ENCODE measurements at regions of chr12 and their contacts with region 1.

Region 1: GRCh38 chr12:57904848-57905811 is 36.2 kb upstream of the ATP23 start:
- DNase-seq: peak; percentile 73 to 90 (median 85)
- ATAC-seq: peak; percentile 100
- H3K4me3 ChIP-seq: no peak overlapping the region
- H3K4me3 Mint-ChIP-seq: peak overlapping the region; percentile 61
- H3K27ac ChIP-seq: no peak overlapping the region
- H3K27ac Mint-ChIP-seq: no peak overlapping the region
- H3K4me1 ChIP-seq: peaks cover 3% of the 10 kb centered on the region
- H3K4me1 Mint-ChIP-seq: peaks cover 5% of the 10 kb centered on the region
- H3K27me3 ChIP-seq: peaks cover 0 to 2% of the 10 kb centered on the region in 2 experiments
- H3K27me3 Mint-ChIP-seq: peaks cover 5% of the 10 kb centered on the region
- CTCF ChIP-seq: peak; percentile 100

Region 2: GRCh38 chr12:57751788-57752667 is 153.1 kb before region 1 on chr12 and contains the start of gene CDK4:
- CTCF ChIA-PET with region 1: interaction called, 33 read pairs
- POLR2A ChIA-PET with region 1: no interaction called
- intact Hi-C with region 1: loop called (anchors 1 kb)
- DNase-seq: peak; percentile 96 to 100 (median 99)
- ATAC-seq: peak; percentile 78
- H3K4me3 ChIP-seq: peak within 1 kb of the TSS; percentile 80 to 85
- H3K4me3 Mint-ChIP-seq: peak within 1 kb of the TSS; percentile 90
- H3K27ac ChIP-seq: peak within 1 kb of the TSS; percentile 84 to 92
- H3K27ac Mint-ChIP-seq: peak within 1 kb of the TSS; percentile 88
- H3K4me1 ChIP-seq: peaks cover 50% of the 10 kb centered on the region
- H3K4me1 Mint-ChIP-seq: peaks cover 57% of the 10 kb centered on the region
- H3K27me3 ChIP-seq: no peaks in the 10 kb centered on the region
- H3K27me3 Mint-ChIP-seq: no peaks in the 10 kb centered on the region
- CTCF ChIP-seq: no peak
- total RNA-seq, gene CDK4: 8.5 to 10.0 TPM

Region 3: DNA sequence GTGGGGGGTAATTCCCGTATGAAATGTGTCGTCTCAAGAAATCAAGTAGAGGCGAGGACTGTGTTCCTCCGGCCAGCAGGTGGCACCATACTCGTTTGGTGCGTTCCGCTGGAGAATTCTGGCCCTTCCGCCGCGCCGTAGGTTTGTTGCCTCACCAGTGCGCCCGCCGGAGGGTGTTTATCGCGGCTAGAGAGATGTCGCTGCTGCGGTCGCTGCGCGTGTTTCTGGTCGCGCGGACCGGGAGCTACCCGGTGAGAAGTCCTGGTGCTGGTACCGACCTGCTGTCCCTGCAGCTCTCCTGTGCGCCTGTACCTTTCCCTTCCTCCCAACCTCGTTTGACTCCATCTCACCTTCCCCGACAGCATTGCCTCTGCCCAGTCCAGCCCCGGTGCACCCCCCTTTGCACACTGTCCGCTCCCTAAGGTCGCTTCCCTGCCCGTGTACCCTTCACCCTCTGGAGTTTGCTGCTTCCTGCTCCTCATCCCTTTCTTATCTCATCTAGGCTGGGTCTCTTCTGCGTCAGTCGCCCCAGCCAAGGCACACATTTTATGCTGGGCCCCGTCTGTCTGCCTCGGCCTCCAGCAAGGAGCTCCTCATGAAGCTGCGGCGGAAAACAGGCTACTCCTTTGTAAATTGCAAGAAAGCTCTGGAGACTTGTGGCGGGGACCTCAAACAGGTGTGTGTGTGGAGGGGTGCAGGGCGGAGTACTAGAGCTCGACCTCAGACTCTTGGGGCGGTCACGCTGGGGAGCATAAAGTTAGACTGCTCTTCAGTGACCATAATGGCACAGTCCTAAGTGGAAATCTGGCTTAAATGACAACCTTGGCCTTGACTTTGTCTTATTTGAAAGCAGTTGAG is 122.3 kb before region 1 on chr12 and contains the start of gene TSFM:
- CTCF ChIA-PET with region 1: interaction called, 16 read pairs
- POLR2A ChIA-PET with region 1: no interaction called
- intact Hi-C with region 1: loop called in 1 of 2 experiments (anchors 1 kb)
- DNase-seq: peak; percentile 93 to 99 (median 97)
- ATAC-seq: peak; percentile 96
- H3K4me3 ChIP-seq: peak within 1 kb of the TSS; percentile 87 to 95
- H3K4me3 Mint-ChIP-seq: peak within 1 kb of the TSS; percentile 100
- H3K27ac ChIP-seq: peak within 1 kb of the TSS; percentile 72 to 85
- H3K27ac Mint-ChIP-seq: peak within 1 kb of the TSS; percentile 99
- H3K4me1 ChIP-seq: peaks cover 36% of the 10 kb centered on the region
- H3K4me1 Mint-ChIP-seq: peaks cover 51% of the 10 kb centered on the region
- H3K27me3 ChIP-seq: no peaks in the 10 kb centered on the region
- H3K27me3 Mint-ChIP-seq: no peaks in the 10 kb centered on the region
- CTCF ChIP-seq: peak; percentile 92
- total RNA-seq, gene TSFM: 37.0 to 37.1 TPM

Region 4: DNA sequence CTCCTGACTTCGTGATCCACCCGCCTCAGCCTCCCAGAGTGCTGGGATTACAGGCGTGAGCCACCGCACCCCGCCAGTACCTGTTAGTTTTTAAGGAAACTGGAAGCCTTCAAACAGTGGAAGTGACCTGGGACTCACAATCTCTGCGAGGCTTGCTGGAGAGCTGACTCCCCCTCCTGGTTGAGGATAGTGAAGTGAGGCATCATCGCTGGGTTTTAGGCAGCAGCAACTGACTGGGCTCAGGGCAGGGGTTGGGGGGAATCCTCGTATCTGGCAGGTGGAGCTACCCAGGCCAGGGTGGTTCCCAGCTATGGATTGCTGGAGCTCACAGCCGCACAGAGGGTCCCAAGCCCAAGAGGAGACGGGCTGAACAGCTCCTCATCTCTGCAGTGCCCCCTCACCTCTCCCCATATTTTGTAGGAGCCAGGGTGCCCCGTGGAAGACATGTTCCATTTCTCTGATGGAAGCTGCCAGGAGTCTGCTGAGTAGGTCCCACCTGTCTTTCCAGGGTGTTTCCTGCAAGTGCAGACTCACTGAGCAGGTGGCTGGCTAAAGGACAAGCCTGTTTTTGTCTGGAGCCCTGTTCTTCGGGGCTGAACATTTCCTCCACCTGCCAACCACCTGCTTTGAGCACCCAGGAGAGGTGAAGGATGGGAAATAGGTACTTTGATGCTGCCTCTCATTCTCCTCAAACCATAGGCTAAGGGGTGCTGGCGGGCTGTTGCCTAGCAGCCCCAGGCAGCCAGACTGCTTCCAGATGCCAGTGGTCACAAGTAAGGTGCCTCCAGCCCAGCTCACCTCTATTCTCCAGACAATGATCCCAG is 89.7 kb before region 1 on chr12:
- CTCF ChIA-PET with region 1: interaction called, 20 read pairs
- POLR2A ChIA-PET with region 1: no interaction called
- intact Hi-C with region 1: no loop called
- DNase-seq: peak in 1 of 9 experiments; percentile 30
- ATAC-seq: no peak
- H3K4me3 ChIP-seq: no peak overlapping the region
- H3K4me3 Mint-ChIP-seq: no peak overlapping the region
- H3K27ac ChIP-seq: no peak overlapping the region
- H3K27ac Mint-ChIP-seq: no peak overlapping the region
- H3K4me1 ChIP-seq: no peaks in the 10 kb centered on the region
- H3K4me1 Mint-ChIP-seq: no peaks in the 10 kb centered on the region
- H3K27me3 ChIP-seq: no peaks in the 10 kb centered on the region
- H3K27me3 Mint-ChIP-seq: no peaks in the 10 kb centered on the region
- CTCF ChIP-seq: no peak

Region 5: DNA sequence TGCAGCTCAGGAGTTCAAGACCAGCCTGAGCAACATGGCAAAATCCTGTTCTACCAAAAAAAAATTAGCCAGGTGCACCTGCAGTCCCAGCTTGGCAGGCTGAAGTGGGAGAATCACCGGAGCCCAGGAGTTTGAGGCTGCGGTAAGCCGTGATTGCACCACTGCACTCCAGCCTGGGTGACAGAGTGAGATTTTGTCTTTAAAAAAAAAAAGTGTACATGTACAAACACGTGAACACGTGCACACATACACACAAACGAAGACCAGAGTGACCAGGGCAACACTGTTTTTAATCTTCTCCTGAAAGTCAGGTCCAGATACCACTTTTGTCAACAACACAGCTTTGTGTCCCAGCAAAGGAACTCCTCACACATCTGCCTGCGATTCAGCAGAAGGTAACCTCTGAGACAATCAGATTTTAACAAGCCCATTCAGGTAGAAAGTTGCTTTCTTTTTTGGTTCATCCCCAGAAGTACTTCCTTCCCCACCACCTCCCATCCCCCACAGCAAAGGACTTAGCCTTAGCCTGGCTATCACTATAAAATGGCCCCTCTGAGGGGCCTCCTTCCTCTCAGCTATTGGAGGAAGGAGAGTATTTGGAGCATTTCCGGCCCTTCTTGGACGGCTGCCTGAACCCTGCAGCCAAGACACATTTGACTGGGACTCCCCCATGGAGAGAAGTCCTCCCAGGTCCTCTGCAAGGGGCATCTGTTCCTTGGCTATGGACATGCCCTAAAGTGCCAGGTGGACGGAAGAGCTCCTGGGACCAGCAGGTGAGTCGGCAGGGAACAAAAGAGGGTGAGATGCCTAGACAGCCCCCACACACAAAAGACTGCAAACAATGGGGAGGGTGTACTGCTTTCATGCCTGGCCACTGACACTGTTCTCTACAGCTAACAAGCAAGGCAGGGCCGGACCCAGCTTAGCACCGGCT is 68.4 kb before region 1 on chr12:
- CTCF ChIA-PET with region 1: interaction called, 102 read pairs
- POLR2A ChIA-PET with region 1: no interaction called
- intact Hi-C with region 1: loop called (anchors 1 kb)
- DNase-seq: peak in 5 of 9 experiments; percentile 42 to 73 (median 55)
- ATAC-seq: peak; percentile 26
- H3K4me3 ChIP-seq: peak overlapping the region in 1 of 2 experiments; percentile 32
- H3K4me3 Mint-ChIP-seq: peak overlapping the region; percentile 63
- H3K27ac ChIP-seq: peak overlapping the region; percentile 37 to 64
- H3K27ac Mint-ChIP-seq: peak overlapping the region; percentile 94
- H3K4me1 ChIP-seq: peaks cover 98% of the 10 kb centered on the region
- H3K4me1 Mint-ChIP-seq: peaks cover 93% of the 10 kb centered on the region
- H3K27me3 ChIP-seq: no peaks in the 10 kb centered on the region
- H3K27me3 Mint-ChIP-seq: no peaks in the 10 kb centered on the region
- CTCF ChIP-seq: no peak

Region 6: DNA sequence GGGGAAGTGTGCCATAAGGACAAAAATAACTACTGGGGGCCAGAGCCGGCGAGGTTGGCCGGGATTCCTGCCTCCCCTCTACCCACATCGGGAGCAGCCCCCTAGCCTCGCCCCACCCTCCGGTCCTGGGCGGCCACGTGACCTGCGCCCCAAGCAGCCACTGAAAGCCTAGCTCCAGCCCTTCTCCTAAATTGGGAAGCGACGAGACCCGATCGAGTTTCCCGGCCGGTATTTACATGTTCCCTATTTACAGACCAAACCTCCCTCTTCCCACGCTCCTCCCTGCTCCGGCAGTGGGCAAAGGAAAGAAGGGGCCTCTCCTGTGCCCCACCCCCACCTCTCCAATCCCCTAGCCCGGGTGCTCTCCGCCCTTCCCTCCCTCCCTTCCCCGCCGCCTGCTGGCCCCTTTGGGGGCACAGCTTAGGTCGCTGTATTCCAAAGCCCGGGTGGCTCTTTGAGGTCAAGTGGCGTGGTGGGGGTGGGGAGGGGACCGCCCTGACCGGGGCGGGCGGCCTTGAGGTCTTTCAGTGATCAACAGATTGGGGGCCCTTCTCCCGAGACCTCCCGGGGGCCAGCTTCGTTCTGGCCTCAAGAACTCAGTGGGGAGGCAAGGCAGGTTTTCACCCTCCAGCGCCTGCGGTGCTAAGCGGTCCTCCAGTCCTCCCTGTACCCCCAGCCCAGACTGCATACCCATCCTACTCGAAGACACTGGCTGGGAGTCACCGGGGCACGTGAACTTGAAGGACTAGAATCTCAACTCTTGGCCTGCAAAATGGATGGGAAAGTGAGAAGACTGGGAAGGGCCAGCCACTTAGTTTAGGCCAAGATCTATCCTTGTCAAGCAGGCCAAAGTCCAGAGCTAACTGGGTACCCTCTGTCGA is 52.3 kb before region 1 on chr12:
- CTCF ChIA-PET with region 1: interaction called, 19 read pairs
- POLR2A ChIA-PET with region 1: no interaction called
- intact Hi-C with region 1: loop called in 1 of 2 experiments (anchors 5 kb)
- DNase-seq: no peak
- ATAC-seq: no peak
- H3K4me3 ChIP-seq: no peak overlapping the region
- H3K4me3 Mint-ChIP-seq: peak overlapping the region; percentile 29
- H3K27ac ChIP-seq: no peak overlapping the region
- H3K27ac Mint-ChIP-seq: no peak overlapping the region
- H3K4me1 ChIP-seq: peaks cover 16% of the 10 kb centered on the region
- H3K4me1 Mint-ChIP-seq: peaks cover 21% of the 10 kb centered on the region
- H3K27me3 ChIP-seq: peaks cover 0 to 6% of the 10 kb centered on the region in 2 experiments
- H3K27me3 Mint-ChIP-seq: peaks cover 16% of the 10 kb centered on the region
- CTCF ChIP-seq: no peak

Region 7: DNA sequence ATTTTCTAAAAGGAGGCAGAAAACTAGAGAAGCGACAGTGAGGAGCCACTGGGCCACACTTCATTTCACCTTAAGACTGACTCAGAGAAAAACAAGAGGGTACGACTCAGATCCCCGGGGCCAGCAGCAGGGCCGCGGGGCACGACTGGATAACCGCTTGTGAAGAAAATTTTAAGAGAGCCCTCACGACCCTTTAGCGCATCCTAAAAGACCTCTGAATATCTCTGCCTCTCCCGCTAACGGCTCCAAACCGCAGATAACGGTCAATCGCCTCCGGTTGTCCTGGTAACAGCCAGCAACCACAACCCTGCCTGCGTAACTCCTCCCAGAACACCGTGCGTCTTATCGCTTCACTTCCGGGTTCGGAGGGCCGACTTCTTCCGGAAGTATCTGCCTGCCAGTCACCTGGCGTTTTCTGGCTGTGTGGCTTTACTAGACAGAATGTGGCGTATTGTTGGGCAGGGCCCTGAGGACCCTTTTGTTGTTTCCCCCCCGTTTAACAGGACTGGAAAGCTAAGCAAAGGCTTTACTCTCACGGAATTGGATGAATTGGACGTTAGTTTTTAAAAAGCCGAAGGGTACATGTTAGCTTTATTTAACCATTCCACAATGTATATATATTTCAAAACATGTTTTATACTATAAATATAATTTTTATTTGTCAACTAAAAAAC is 30.8 kb after region 1 on chr12:
- CTCF ChIA-PET with region 1: no interaction called
- POLR2A ChIA-PET with region 1: no interaction called
- intact Hi-C with region 1: loop called in 1 of 2 experiments (anchors 1 kb)
- DNase-seq: peak; percentile 81 to 98 (median 90)
- ATAC-seq: peak; percentile 90
- H3K4me3 ChIP-seq: peak overlapping the region; percentile 49 to 61
- H3K4me3 Mint-ChIP-seq: peak overlapping the region; percentile 99
- H3K27ac ChIP-seq: peak overlapping the region; percentile 91 to 93
- H3K27ac Mint-ChIP-seq: peak overlapping the region; percentile 100
- H3K4me1 ChIP-seq: peaks cover 23% of the 10 kb centered on the region
- H3K4me1 Mint-ChIP-seq: peaks cover 40% of the 10 kb centered on the region
- H3K27me3 ChIP-seq: no peaks in the 10 kb centered on the region
- H3K27me3 Mint-ChIP-seq: no peaks in the 10 kb centered on the region
- CTCF ChIP-seq: no peak

Region 8: DNA sequence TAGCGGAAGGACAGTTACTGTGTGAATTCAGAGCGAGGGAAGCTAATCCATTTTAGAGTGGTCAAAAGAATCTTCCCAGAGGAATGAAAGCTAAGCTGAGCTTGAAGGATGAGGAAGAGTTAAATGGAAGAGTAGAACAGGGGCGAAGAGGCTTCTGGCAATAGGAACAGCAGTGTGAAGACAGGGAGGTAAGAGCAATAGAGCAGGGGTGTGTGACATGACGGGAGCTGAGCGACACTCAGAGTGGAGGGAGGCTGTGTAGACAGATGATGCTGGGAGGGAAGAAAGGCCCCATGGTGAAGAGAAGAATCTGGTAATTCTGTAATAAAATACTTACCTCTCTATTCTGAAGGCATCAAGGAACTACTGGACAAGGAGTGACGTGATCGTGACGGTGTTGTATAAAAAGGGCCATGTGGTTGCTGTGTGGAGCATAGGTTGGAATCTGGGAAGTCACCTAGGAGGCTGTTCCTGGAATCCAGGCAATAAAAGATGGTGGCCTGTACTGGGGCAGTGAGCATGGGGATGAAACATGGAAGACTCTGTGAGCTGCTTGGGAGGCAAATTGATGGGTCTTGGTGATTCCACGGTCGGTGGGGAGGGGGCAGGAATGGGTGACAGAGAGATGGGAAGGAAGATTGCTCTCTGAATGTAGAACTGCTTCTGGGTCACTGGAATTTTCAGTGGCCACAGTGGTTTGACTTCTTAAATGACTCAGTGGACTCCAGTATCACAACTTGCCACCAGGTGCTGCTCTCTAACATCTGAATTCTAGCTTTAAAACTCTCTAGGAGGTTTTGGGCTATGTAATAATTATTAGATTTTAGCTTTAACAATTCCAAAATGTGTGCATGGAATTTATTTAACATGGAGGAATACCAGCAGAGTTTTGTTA is 200.3 kb after region 1 on chr12:
- CTCF ChIA-PET with region 1: no interaction called
- POLR2A ChIA-PET with region 1: no interaction called
- intact Hi-C with region 1: no loop called
- DNase-seq: no peak
- ATAC-seq: no peak
- H3K4me3 ChIP-seq: no peak overlapping the region
- H3K4me3 Mint-ChIP-seq: no peak overlapping the region
- H3K27ac ChIP-seq: no peak overlapping the region
- H3K27ac Mint-ChIP-seq: no peak overlapping the region
- H3K4me1 ChIP-seq: no peaks in the 10 kb centered on the region
- H3K4me1 Mint-ChIP-seq: no peaks in the 10 kb centered on the region
- H3K27me3 ChIP-seq: no peaks in the 10 kb centered on the region
- H3K27me3 Mint-ChIP-seq: peaks cover 8% of the 10 kb centered on the region
- CTCF ChIP-seq: no peak